Caco-2 (cell line): ENCODE measurements at regions of chr1 and their contacts with region 1.

Region 1: GRCh38 chr1:172951730-172952365 is 98.9 kb downstream of the TNFSF18 start:
- DNase-seq: no peak
- H3K4me3 ChIP-seq: no peak overlapping the region
- H3K4me3 Mint-ChIP-seq: no peak overlapping the region
- H3K27ac Mint-ChIP-seq: no peak overlapping the region
- H3K4me1 ChIP-seq: peaks cover 24% of the 10 kb centered on the region
- H3K4me1 Mint-ChIP-seq: peaks cover 19% of the 10 kb centered on the region
- H3K27me3 ChIP-seq: no peaks in the 10 kb centered on the region
- H3K27me3 Mint-ChIP-seq: no peaks in the 10 kb centered on the region
- CTCF ChIP-seq: no peak

Region 2: DNA sequence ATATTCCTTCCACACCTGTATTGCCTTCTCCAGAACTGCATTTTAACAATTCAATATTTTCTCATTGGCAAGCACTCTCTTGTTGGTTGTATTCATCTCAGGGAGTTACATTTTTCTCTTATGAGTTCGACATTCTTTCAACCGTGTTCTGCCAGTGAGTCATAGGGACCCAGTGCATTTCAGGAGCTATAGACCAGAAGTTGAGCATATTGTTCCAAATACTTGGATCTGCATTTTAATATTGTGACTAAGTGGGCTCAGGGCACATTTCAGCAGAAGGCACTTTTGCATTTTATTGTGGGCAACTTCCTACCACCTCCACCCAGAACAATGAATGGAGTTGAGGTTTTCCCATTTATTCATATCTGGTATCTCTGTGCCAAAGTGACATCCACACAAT is 33.9 kb before region 1 on chr1:
- CTCF ChIA-PET with region 1: no interaction called
- POLR2A ChIA-PET with region 1: no interaction called
- intact Hi-C with region 1: no loop called
- DNase-seq: no peak
- H3K4me3 ChIP-seq: no peak overlapping the region
- H3K4me3 Mint-ChIP-seq: no peak overlapping the region
- H3K27ac Mint-ChIP-seq: no peak overlapping the region
- H3K4me1 ChIP-seq: peaks cover 7% of the 10 kb centered on the region; the same call in 1 of the 2 replicates
- H3K4me1 Mint-ChIP-seq: no peaks in the 10 kb centered on the region
- H3K27me3 ChIP-seq: no peaks in the 10 kb centered on the region
- H3K27me3 Mint-ChIP-seq: no peaks in the 10 kb centered on the region
- CTCF ChIP-seq: no peak

Region 3: GRCh38 chr1:172969611-172970010 is 17.8 kb after region 1 on chr1:
- CTCF ChIA-PET with region 1: no interaction called
- POLR2A ChIA-PET with region 1: no interaction called
- intact Hi-C with region 1: loop called (anchors 1 kb)
- DNase-seq: peak in 1 of 2 experiments; percentile 15
- H3K4me3 ChIP-seq: no peak overlapping the region
- H3K4me3 Mint-ChIP-seq: no peak overlapping the region
- H3K27ac Mint-ChIP-seq: no peak overlapping the region
- H3K4me1 ChIP-seq: peaks cover 31% of the 10 kb centered on the region
- H3K4me1 Mint-ChIP-seq: peaks cover 39% of the 10 kb centered on the region
- H3K27me3 ChIP-seq: no peaks in the 10 kb centered on the region
- H3K27me3 Mint-ChIP-seq: no peaks in the 10 kb centered on the region
- CTCF ChIP-seq: no peak